ENCODE measurements at regions of chr1 and their contacts with region 1.

Region 1: DNA sequence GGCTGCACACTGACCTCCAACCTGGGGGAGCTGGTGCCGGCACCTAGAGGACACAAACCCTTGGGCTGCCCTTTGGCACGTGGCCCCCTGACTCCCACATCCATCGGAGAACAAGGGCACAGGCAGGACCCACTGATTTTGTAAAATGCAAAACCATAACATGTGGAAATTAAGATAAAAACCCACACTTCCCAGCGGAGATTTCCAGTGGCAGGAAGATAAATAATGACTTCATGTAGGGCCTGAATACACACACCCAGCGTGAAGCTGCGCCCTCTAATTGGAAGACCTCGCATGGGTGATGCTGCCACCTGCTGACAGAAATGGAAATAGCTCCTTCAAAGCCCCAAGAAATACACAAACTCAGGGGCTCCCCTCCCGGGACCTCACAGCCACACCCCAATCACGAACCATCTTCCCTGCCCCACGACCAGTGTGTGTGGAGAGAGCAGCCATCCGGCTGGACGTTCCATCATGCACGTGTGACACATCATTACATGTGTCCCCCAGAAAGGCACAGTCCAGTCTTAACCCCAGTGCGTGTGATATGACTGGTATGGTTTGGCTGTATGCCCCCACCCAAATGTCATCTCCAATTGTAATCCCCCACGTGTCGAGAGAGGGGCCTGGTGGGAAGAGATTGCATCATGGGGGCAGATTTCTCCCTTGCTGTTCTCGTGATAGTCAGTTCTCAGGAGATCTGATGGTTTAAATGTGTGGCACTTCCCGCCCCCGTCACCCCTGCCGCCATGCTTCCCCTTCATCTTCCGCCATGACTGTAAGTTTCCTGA is 5.7 kb upstream of the TPRG1L start:
- DNase-seq: peak; percentile 79
- H3K4me3 Mint-ChIP-seq: no peak overlapping the region
- H3K27ac Mint-ChIP-seq: no peak overlapping the region
- H3K4me1 Mint-ChIP-seq: peaks cover 24% of the 10 kb centered on the region
- H3K27me3 Mint-ChIP-seq: no peaks in the 10 kb centered on the region
- CTCF ChIP-seq: peak; percentile 85

Region 2: DNA sequence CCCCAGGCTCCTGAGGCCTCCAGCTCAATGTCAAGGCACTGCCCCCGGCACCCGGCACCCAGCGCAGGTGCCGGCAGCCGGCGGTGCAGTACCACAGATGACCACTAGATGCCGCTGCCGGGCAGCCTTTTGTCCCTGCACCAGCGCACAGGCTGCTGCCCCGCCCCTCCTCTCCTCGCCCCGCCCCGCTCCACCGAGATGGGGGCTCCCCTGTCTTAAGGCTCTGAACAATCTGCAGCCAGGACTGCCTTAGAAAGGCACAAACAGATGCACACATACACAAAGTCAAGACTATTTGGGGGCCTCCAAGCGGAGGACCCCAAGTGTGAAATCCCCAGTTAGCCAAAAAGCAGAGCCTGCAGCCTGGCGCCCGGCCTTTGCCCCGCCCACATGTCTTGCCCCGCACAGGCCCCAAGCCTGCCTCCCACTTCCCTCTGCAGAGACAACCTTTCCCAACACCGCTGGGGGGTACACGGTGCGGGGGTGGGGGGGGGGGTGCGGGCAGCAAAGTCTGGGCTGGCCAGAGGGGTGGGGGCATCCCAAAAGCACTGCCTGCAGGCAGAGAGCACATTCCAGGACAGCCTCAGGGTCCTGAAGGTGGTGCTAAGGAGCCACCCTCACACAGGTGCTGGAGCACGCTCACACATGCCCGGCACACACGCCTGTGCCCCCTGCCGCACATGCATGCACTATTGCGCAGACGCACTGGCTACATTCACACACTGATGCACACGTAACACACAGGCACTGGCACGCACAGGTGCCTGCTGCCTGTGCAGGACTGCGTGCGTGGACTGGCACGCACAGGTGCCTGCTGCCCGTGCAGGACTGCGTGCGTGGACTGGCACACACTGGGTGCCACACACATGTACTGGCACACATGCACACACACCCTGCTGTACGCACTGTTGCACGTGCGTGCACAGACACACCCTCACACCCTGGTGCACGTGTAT is 127.5 kb before region 1 on chr1:
- CTCF ChIA-PET with region 1: interaction called, 84 read pairs
- POLR2A ChIA-PET with region 1: interaction called, 5 read pairs
- intact Hi-C with region 1: loop called (anchors 1 kb)
- DNase-seq: peak; percentile 66
- H3K4me3 Mint-ChIP-seq: no peak overlapping the region
- H3K27ac Mint-ChIP-seq: no peak overlapping the region
- H3K4me1 Mint-ChIP-seq: no peaks in the 10 kb centered on the region
- H3K27me3 Mint-ChIP-seq: no peaks in the 10 kb centered on the region
- CTCF ChIP-seq: peak; percentile 99

Region 3: DNA sequence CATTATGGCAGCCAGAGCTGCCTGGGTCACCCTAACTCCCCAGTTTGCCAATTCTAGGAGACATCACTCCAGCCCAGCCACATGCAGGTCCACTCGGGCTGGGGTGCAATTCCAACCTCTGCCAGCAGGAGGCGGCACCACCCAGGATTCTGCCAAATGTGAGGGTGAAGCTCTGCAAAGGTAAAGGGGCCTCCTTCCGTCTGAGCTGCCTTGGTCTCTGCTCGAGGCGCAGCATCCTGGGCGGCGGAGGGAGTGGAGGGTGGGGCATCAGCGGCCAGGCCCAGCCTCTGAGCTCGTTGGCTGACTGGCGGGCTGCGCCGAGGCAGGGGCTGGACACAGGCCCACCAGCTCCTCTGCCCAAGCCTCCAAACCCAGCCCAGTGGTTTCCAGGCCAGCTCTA is 100.8 kb before region 1 on chr1:
- CTCF ChIA-PET with region 1: interaction called, 37 read pairs
- POLR2A ChIA-PET with region 1: interaction called, 4 read pairs
- intact Hi-C with region 1: no loop called
- DNase-seq: no peak
- H3K4me3 Mint-ChIP-seq: no peak overlapping the region
- H3K27ac Mint-ChIP-seq: no peak overlapping the region
- H3K4me1 Mint-ChIP-seq: no peaks in the 10 kb centered on the region
- H3K27me3 Mint-ChIP-seq: no peaks in the 10 kb centered on the region
- CTCF ChIP-seq: peak; percentile 87

Region 4: GRCh38 chr1:3553166-3553939 is 65.7 kb before region 1 on chr1:
- CTCF ChIA-PET with region 1: interaction called, 10 read pairs
- POLR2A ChIA-PET with region 1: interaction called, 3 read pairs
- intact Hi-C with region 1: no loop called
- DNase-seq: peak; percentile 77
- H3K4me3 Mint-ChIP-seq: peak overlapping the region; percentile 35
- H3K27ac Mint-ChIP-seq: no peak overlapping the region
- H3K4me1 Mint-ChIP-seq: peaks cover 11% of the 10 kb centered on the region
- H3K27me3 Mint-ChIP-seq: no peaks in the 10 kb centered on the region
- CTCF ChIP-seq: no peak

Region 5: GRCh38 chr1:3660704-3661103 is 41.6 kb after region 1 on chr1:
- CTCF ChIA-PET with region 1: no interaction called
- POLR2A ChIA-PET with region 1: no interaction called
- intact Hi-C with region 1: no loop called
- DNase-seq: no peak
- H3K4me3 Mint-ChIP-seq: no peak overlapping the region
- H3K27ac Mint-ChIP-seq: no peak overlapping the region
- H3K4me1 Mint-ChIP-seq: no peaks in the 10 kb centered on the region
- H3K27me3 Mint-ChIP-seq: no peaks in the 10 kb centered on the region
- CTCF ChIP-seq: no peak

Region 6: GRCh38 chr1:3697810-3698209 is 78.7 kb after region 1 on chr1:
- CTCF ChIA-PET with region 1: no interaction called
- POLR2A ChIA-PET with region 1: no interaction called
- intact Hi-C with region 1: no loop called
- DNase-seq: peak; percentile 56
- H3K4me3 Mint-ChIP-seq: no peak overlapping the region
- H3K27ac Mint-ChIP-seq: no peak overlapping the region
- H3K4me1 Mint-ChIP-seq: peaks cover 26% of the 10 kb centered on the region
- H3K27me3 Mint-ChIP-seq: no peaks in the 10 kb centered on the region
- CTCF ChIP-seq: no peak

Region 7: DNA sequence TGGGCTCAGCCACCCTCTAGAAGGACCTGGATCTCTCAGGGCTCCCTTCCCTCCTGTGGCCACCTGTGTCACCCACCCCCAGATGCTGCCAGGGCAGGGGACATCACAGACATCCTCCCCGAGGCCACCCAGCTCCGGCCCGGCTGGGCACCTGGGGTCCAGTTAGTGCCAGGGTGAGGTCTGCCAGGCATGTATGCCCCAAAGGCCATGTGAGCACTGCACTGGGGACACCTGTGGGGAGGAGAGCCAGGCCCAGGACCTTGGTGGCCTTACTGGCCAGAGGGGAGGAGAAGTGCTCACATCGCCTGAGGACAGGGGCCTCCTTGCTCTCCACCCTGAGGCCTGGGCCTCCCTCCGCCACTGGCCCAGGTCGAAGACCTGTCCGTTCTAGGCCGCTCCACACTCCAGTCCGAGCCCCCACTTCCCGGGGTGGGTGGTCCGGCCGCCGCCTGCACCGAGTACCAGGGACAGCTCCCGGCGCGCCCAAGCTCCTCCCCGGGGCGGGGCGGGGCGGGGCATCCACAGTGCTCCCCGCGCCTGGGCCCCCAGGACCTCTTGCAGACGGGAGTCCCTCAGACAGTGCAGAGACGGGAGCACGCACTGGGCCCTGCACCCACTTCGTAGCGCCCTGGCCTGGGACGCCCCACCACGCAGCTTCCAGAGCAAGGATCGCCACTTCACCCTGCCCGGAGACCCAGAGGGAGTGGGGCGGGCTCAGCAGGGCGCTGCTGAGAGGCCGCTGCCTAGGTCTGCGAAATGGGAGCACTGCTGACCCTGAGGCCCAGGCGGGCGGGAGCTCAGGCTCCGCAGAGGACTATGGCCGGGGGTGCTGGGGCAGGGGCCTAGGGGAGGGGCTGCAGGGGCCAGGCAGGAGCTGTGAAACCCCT is 98.9 kb after region 1 on chr1:
- CTCF ChIA-PET with region 1: interaction called, 16 read pairs
- POLR2A ChIA-PET with region 1: interaction called, 4 read pairs
- intact Hi-C with region 1: no loop called
- DNase-seq: no peak
- H3K4me3 Mint-ChIP-seq: no peak overlapping the region
- H3K27ac Mint-ChIP-seq: no peak overlapping the region
- H3K4me1 Mint-ChIP-seq: peaks cover 13% of the 10 kb centered on the region
- H3K27me3 Mint-ChIP-seq: no peaks in the 10 kb centered on the region
- CTCF ChIP-seq: no peak